Esophagus muscularis mucosa (tissue), 4 donors: ENCODE measurements at regions of chrX and their contacts with region 1.

Region 1: GRCh38 chrX:40539214-40540142 is 41.3 kb upstream of the ATP6AP2 start:
- DNase-seq: no peak
- H3K4me3 ChIP-seq: no peak overlapping the region
- H3K27ac ChIP-seq: peak overlapping the region in 1 of 4 donors; percentile 7
- H3K4me1 ChIP-seq: peaks cover 0 to 10% (median 8%) of the 10 kb centered on the region in 4 donors
- H3K27me3 ChIP-seq: peaks cover 0 to 5% (median 0%) of the 10 kb centered on the region in 4 donors
- CTCF ChIP-seq: no peak
- EP300 ChIP-seq: no peak
- POLR2A ChIP-seq: no peak

Region 2: DNA sequence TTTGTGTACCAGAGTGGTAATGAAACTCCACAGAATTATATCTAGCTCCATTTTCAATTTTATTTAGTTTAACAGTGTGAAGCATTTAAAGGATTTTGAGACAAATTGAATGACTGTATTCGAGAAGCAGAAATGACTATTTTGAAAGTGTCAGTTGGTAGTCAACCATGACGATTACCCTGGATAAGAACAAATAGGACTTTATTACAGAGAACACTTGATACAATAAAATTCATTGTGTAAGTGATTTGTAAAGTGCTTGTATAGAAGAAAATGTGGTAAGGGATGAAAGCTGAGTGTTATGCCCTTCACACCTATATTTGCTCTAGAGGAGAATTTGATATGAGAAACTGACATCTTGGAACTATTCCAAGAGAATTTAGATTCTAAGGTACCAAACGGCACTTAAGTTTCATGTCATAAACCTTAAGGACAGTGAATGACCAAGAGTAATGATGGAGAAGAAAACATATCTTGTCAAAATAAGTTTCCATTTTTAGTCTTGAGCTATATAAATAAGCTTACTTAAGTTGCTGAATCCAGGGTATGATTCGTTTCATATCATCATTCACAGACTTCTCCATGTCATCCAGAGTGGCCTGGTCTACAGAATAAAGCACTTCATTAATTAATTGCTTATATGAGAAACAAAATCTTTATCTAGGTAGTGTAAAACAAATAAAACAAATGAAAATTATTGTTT is 161.3 kb after region 1 on chrX:
- intact Hi-C with region 1: no loop called
- DNase-seq: no peak
- H3K4me3 ChIP-seq: no peak overlapping the region
- H3K27ac ChIP-seq: no peak overlapping the region
- H3K4me1 ChIP-seq: no peaks in the 10 kb centered on the region
- H3K27me3 ChIP-seq: no peaks in the 10 kb centered on the region
- CTCF ChIP-seq: no peak
- EP300 ChIP-seq: no peak
- POLR2A ChIP-seq: no peak

Region 3: DNA sequence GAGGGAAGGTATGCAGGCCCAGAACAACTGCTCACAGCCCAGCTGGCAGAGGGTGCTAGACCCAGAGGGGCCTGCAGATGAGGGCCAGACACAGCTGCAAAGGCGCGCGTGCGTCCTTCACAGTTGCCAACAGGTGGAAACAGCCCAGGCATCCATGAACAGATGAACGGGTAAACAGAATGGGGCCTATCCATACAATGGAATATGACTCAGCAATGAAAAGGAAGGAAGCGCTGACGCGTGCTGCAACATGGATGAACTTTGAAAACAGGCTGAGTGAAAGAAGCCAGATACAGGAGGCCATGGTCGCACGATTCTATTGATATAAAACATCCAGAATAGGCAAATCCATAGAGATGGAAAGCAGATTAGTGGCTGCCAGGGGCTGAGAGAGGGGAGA is 711.4 kb after region 1 on chrX:
- intact Hi-C with region 1: loop called (anchors 5 kb)
- DNase-seq: no peak
- H3K4me3 ChIP-seq: no peak overlapping the region
- H3K27ac ChIP-seq: no peak overlapping the region
- H3K4me1 ChIP-seq: peaks cover 4 to 13% (median 6%) of the 10 kb centered on the region in 4 donors
- H3K27me3 ChIP-seq: peaks cover 0 to 6% (median 0%) of the 10 kb centered on the region in 4 donors
- CTCF ChIP-seq: no peak
- EP300 ChIP-seq: no peak
- POLR2A ChIP-seq: no peak